A549 (cell line): ENCODE measurements at regions of chr17 and their contacts with region 1.

Region 1: DNA sequence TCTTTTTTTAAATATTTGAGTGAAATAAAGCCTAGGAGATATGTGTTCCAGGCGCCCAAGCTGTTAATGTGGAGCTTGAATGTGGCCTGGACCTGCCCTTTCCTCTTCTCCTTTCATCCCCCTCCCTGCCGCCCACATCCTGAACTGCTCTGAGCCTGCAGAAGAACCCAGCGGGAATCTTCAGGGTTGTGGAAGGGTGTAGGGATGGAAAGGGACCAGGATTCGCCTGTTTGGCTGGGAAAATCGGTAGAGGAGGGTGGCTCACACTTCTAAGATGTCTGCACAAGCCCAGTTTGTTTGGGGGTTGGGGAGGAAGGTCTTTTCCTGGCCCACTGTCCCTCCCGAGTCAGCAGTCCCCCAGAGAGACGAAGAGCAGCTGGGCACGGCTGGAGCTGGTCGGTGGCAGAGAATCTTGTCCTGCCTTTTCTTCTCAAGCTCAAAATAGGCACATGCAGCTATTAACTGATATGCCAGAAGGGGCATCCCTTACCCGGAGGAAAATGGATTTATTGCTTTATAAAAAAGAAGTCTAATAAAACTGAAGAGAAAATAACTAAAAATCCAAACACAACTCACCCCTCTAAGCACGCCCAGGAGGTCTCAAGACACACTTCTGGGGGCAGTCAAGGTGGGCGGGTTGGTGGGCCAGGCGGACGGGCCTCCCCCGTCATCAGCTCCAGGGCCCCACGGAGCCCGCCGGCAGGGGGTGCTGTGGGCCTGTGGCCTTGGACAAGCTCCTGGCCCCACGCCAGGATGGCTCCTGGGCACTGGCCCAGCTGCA is 11.5 kb upstream of the PITPNA start:
- DNase-seq: peak; percentile 82 to 92
- ATAC-seq: peak; percentile 73 to 87
- H3K4me3 ChIP-seq: no peak overlapping the region
- H3K27ac ChIP-seq: peak overlapping the region in 1 of 2 experiments; percentile 65; a peak in 3 of 6 replicates
- H3K4me1 ChIP-seq: peaks cover 17% of the 10 kb centered on the region
- CTCF ChIP-seq: peak; percentile 98
- EP300 ChIP-seq: no peak
- POLR2A ChIP-seq: no peak
- RAD21 ChIP-seq: peak; percentile 95 to 100

Region 2: GRCh38 chr17:1555651-1556471 is 18.2 kb before region 1 on chr17:
- CTCF ChIA-PET with region 1: interaction called, 24 read pairs
- POLR2A ChIA-PET with region 1: no interaction called
- DNase-seq: no peak
- ATAC-seq: no peak
- H3K4me3 ChIP-seq: no peak overlapping the region
- H3K27ac ChIP-seq: no peak overlapping the region
- H3K4me1 ChIP-seq: peaks cover 5% of the 10 kb centered on the region; the same call in 2 of the 3 replicates
- CTCF ChIP-seq: no peak
- EP300 ChIP-seq: no peak
- POLR2A ChIP-seq: no peak
- RAD21 ChIP-seq: no peak

Region 3: DNA sequence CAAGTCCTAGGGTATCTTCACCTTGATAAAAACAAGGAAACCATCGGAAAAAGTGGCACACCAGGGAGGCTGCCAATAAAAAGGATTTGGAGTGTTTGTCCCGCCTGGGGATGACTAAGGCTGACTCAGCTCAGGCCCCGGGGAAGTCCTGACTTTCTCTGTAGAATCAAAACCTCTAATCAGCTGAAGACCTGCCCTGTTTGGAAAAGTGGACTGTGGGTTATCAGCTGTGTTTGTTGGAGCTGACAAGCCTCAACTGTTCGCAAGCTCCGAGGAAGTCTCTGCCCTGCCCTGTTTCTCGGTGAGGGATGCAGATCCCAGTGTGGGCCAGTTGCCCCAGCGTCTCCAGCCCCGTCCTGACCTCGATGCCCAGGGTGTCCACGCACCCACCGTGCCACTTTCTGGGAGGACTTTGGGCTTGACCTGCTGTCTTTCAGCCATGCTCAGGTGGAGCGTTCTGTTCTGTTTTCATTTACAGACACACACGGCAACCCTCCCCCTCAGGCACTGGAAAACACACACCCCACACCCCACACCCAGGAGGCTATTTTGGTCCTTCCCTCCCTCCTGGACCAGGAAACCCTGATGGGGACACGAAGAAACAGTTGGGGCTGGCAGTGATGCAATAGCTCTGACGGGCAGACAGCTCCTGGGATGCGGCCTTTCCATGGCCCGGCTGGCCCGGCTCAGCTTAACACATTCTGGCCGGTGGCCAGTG is 16.1 kb after region 1 on chr17:
- CTCF ChIA-PET with region 1: interaction called, 82 read pairs
- POLR2A ChIA-PET with region 1: interaction called, 5 read pairs
- DNase-seq: peak; percentile 90 to 99
- ATAC-seq: peak; percentile 88 to 93
- H3K4me3 ChIP-seq: peak overlapping the region; percentile 22; the same call in 1 of the 3 replicates
- H3K27ac ChIP-seq: peak overlapping the region; percentile 76 to 84
- H3K4me1 ChIP-seq: peaks cover 42% of the 10 kb centered on the region
- CTCF ChIP-seq: no peak
- EP300 ChIP-seq: no peak
- POLR2A ChIP-seq: no peak
- RAD21 ChIP-seq: no peak; a peak in 2 of 5 replicates

Region 4: DNA sequence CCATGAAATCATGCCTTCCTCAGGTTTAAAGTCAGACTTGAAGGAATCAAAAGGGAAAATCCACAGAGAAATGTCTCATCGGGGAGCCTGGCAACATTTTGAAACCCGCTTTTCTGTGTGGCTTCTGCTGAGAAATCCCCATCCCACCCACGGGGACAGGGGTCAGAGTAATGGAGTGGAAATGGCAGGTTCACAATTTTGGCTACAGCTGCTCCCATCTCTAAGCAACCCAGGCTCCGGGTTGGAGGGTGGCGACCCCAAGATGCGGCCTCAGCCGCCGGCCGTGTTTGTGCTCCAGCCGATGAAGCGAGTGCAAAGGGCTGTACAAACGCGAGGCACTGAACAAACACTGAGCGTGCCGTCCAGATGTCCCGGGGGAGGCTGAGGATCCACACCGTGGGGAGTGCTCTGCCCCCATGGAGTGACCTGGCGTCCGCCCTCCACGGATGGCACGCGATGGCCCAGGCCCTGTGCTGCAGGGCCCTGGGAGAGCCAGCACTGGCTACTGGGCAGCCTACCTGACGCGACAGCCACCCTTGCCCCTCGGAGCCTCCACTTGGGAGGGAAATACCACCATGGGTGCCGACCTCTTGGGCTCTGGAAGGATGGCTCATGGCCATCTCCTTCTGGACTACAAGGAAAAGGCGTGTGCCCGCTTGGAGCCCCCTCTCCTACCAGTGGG is 32.4 kb after region 1 on chr17:
- CTCF ChIA-PET with region 1: interaction called, 263 read pairs
- POLR2A ChIA-PET with region 1: no interaction called
- DNase-seq: no peak
- ATAC-seq: peak in 1 of 2 experiments; percentile 28; a peak in 3 of 6 replicates
- H3K4me3 ChIP-seq: no peak overlapping the region
- H3K27ac ChIP-seq: no peak overlapping the region
- H3K4me1 ChIP-seq: no peaks in the 10 kb centered on the region
- CTCF ChIP-seq: no peak
- EP300 ChIP-seq: no peak
- POLR2A ChIP-seq: no peak
- RAD21 ChIP-seq: no peak

Region 5: GRCh38 chr17:1648963-1649843 is 75.1 kb after region 1 on chr17:
- CTCF ChIA-PET with region 1: interaction called, 201 read pairs
- POLR2A ChIA-PET with region 1: interaction called, 22 read pairs
- DNase-seq: peak; percentile 88 to 97
- ATAC-seq: peak; percentile 61 to 74
- H3K4me3 ChIP-seq: peak overlapping the region; percentile 54
- H3K27ac ChIP-seq: peak overlapping the region; percentile 85 to 89
- H3K4me1 ChIP-seq: peaks cover 30% of the 10 kb centered on the region
- CTCF ChIP-seq: peak; percentile 99
- EP300 ChIP-seq: no peak
- POLR2A ChIP-seq: peak; percentile 85
- RAD21 ChIP-seq: peak; percentile 65 to 86

Region 6: DNA sequence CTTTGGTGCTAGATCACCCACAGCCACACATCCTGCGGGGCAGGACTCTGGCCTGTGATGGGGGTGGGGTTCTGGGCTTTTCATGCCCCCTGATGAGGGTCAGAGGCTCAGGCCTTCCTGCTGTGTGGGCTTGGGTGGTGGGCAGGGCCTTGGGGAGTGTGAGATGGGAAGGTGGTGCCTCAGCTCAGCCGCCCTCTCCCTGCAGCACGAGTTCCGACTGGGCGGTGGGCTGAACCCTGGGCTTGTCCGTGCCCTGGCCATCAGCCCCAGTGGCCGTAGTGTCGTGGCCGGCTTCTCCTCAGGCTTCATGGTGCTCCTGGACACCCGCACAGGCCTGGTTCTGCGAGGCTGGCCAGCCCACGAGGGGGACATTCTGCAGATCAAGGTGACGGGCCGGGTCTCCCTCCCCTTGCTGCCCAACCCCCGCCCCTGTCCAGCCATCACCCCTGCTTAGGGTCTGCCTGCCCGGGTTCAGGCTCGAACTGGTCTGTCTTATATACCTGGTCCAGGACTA is 161.8 kb after region 1 on chr17:
- CTCF ChIA-PET with region 1: no interaction called
- POLR2A ChIA-PET with region 1: no interaction called
- DNase-seq: no peak
- ATAC-seq: peak; percentile 9 to 14; a peak in 3 of 6 replicates
- H3K4me3 ChIP-seq: no peak overlapping the region
- H3K27ac ChIP-seq: peak overlapping the region; percentile 53 to 84
- H3K4me1 ChIP-seq: peaks cover 23% of the 10 kb centered on the region
- CTCF ChIP-seq: no peak
- EP300 ChIP-seq: no peak
- POLR2A ChIP-seq: no peak
- RAD21 ChIP-seq: no peak